ENCODE measurements at regions of chr11 and their contacts with region 1.

Region 1: DNA sequence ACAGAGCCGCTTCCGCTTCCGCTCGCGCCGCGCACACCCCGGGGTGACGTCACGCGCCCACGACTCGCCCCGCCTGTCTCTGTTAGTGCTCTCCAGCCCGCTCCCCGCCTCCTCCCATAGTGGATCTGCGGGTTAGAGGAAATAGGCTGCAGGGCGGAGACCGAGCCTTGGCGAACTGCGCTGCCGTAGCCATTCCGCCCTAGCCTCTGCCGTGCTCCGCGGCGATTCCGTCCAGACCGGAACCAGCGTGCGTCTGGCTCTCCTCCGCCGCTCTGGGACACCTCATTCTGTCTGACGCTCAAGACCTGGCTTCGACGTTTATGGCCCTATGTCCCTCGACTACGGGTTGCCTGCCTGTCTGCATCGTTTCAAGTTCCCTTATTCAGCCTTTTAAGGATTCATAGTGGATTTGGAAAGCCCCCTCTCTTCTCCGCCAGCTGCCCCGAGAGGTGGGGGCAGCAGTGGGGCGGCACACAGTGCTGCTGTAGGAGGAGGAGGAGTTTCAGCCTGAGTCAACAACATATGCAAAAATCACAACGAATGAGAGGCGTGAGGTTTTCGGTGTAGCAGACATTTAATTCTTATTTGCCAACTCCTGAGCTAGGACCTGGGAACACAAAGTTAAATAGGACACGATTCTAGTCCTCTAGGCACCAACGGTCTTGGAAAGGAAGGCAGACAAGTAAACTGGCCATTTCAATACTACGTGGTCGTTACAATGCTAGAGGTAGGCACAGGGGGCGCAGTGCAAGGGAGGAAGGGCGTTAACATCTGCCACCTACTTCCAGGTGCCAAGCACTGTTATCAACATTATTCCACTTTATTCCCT is at the start of gene TAF10:
- DNase-seq: peak; percentile 96
- H3K4me3 ChIP-seq: peak within 1 kb of the TSS; percentile 87
- H3K27ac ChIP-seq: peak within 1 kb of the TSS; percentile 89
- H3K4me1 ChIP-seq: peaks cover 27% of the 10 kb centered on the region
- CTCF ChIP-seq: peak; percentile 83
- total RNA-seq, gene TAF10: 97.0 and 117 TPM in 2 replicates

Region 2: GRCh38 chr11:6452219-6452618 is 160.2 kb before region 1 on chr11:
- CTCF ChIA-PET with region 1: no interaction called
- POLR2A ChIA-PET with region 1: no interaction called
- intact Hi-C with region 1: no loop called
- DNase-seq: no peak
- H3K4me3 ChIP-seq: no peak overlapping the region
- H3K27ac ChIP-seq: no peak overlapping the region
- H3K4me1 ChIP-seq: peaks cover 30% of the 10 kb centered on the region
- CTCF ChIP-seq: no peak

Region 3: GRCh38 chr11:6566704-6567370 is 45.6 kb before region 1 on chr11:
- CTCF ChIA-PET with region 1: no interaction called
- POLR2A ChIA-PET with region 1: no interaction called
- intact Hi-C with region 1: no loop called
- DNase-seq: no peak
- H3K4me3 ChIP-seq: no peak overlapping the region
- H3K27ac ChIP-seq: no peak overlapping the region
- H3K4me1 ChIP-seq: no peaks in the 10 kb centered on the region
- CTCF ChIP-seq: no peak

Region 4: GRCh38 chr11:6646918-6647679 is 34.7 kb after region 1 on chr11:
- CTCF ChIA-PET with region 1: interaction called, 3 read pairs
- POLR2A ChIA-PET with region 1: interaction called, 4 read pairs
- intact Hi-C with region 1: loop called (anchors 2 kb)
- DNase-seq: peak; percentile 73
- H3K4me3 ChIP-seq: peak overlapping the region; percentile 48
- H3K27ac ChIP-seq: peak overlapping the region; percentile 59
- H3K4me1 ChIP-seq: peaks cover 25% of the 10 kb centered on the region
- CTCF ChIP-seq: no peak

Measured in OCI-LY7 (cell line).